T-cell (primary cell): ENCODE measurements at regions of chr9 and their contacts with region 1.

Region 1: GRCh38 chr9:96856363-96857286 is 2.3 kb upstream of the ZNF782 start:
- DNase-seq: peak; percentile 41 to 81 (median 67)
- ATAC-seq: peak; percentile 63 to 74 (median 69)
- H3K4me3 ChIP-seq: no peak overlapping the region
- H3K4me3 Mint-ChIP-seq: no peak overlapping the region
- H3K27ac ChIP-seq: no peak overlapping the region
- H3K27ac Mint-ChIP-seq: no peak overlapping the region
- H3K4me1 ChIP-seq: peaks cover 12 to 20% of the 10 kb centered on the region in 2 experiments
- H3K4me1 Mint-ChIP-seq: peaks cover 31 to 35% (median 32%) of the 10 kb centered on the region in 3 donors
- H3K27me3 ChIP-seq: no peaks in the 10 kb centered on the region
- H3K27me3 Mint-ChIP-seq: no peaks in the 10 kb centered on the region

Region 2: DNA sequence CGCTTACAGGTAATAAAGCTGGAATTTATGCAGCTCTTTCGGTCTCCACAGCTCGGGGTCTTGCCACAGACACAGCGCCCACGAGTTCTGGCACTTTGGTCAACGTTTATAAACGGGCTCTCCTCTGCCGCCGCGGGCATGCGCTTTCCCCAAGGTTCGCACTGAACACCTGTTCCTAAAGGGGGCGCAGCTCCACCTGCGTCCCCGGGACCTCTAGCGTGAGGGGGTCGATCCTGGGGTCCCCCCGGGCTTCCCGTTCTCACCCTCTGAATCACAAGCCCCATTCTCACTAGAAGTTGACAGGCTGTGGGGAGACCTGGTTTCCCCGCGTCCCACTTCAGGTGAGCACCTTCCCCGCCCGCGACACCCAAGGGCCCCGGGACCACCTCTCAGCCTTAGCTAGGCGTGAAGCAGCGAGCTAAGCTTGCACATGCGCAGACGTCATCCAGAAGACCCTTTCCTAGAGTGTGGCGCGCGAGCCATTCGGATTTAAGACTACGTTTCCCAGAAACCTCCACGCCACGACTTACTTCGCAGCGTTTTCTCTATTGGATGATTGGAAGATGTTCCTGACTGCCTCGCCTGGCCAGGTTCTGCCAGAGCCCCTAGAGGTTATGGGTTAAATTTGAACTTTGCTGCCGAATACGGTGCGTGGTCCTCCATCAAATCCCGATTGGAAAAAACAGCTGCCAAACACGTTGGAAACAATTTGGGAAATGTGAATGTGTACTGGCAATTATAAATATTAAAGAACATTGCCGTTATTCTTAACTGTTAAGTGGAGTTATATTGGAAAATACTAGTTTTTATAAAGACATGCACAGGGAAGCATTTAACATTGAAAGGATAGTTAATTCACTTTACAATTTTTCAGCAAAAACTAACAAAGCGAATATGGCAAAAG is 19.1 kb after region 1 on chr9:
- CTCF ChIA-PET with region 1: interaction called, 6 to 22 read pairs
- POLR2A ChIA-PET with region 1: interaction called in 1 of 2 experiments, 3 read pairs
- DNase-seq: peak in 16 of 35 experiments; percentile 4 to 42 (median 14)
- ATAC-seq: peak; percentile 22 to 47 (median 42)
- H3K4me3 ChIP-seq: peak overlapping the region; percentile 52 to 82
- H3K4me3 Mint-ChIP-seq: peak overlapping the region; percentile 76 to 87 (median 81)
- H3K27ac ChIP-seq: peak overlapping the region; percentile 71
- H3K27ac Mint-ChIP-seq: peak overlapping the region; percentile 58 to 68
- H3K4me1 ChIP-seq: peaks cover 10 to 23% of the 10 kb centered on the region in 2 experiments
- H3K4me1 Mint-ChIP-seq: peaks cover 17 to 22% (median 21%) of the 10 kb centered on the region in 3 donors
- H3K27me3 ChIP-seq: peaks cover 5 to 41% of the 10 kb centered on the region in 2 experiments
- H3K27me3 Mint-ChIP-seq: peaks cover 35 to 53% of the 10 kb centered on the region in 2 donors

Region 3: GRCh38 chr9:97398999-97399758 is 542.6 kb after region 1 on chr9:
- CTCF ChIA-PET with region 1: interaction called, 5 to 13 read pairs
- POLR2A ChIA-PET with region 1: no interaction called
- DNase-seq: peak in 33 of 35 experiments; percentile 14 to 81 (median 48)
- ATAC-seq: peak; percentile 78 to 87 (median 81)
- H3K4me3 ChIP-seq: no peak overlapping the region
- H3K4me3 Mint-ChIP-seq: no peak overlapping the region
- H3K27ac ChIP-seq: no peak overlapping the region
- H3K27ac Mint-ChIP-seq: no peak overlapping the region
- H3K4me1 ChIP-seq: peaks cover 0 to 3% of the 10 kb centered on the region in 2 experiments
- H3K4me1 Mint-ChIP-seq: peaks cover 0 to 3% (median 0%) of the 10 kb centered on the region in 3 donors
- H3K27me3 ChIP-seq: peaks cover 0 to 4% of the 10 kb centered on the region in 2 experiments
- H3K27me3 Mint-ChIP-seq: peaks cover 6 to 9% of the 10 kb centered on the region in 2 donors

Region 4: GRCh38 chr9:97598461-97599288 is 742.0 kb after region 1 on chr9:
- CTCF ChIA-PET with region 1: interaction called, 9 to 17 read pairs
- POLR2A ChIA-PET with region 1: no interaction called
- DNase-seq: peak; percentile 32 to 84 (median 63)
- ATAC-seq: peak; percentile 86 to 97 (median 92)
- H3K4me3 ChIP-seq: peak overlapping the region in 1 of 2 donors; percentile 10
- H3K4me3 Mint-ChIP-seq: peak overlapping the region in 2 of 3 donors; percentile 41 to 44
- H3K27ac ChIP-seq: no peak overlapping the region
- H3K27ac Mint-ChIP-seq: peak overlapping the region in 1 of 2 donors; percentile 15
- H3K4me1 ChIP-seq: peaks cover 0 to 7% of the 10 kb centered on the region in 2 experiments
- H3K4me1 Mint-ChIP-seq: peaks cover 7 to 8% (median 7%) of the 10 kb centered on the region in 3 donors
- H3K27me3 ChIP-seq: peaks cover 0 to 2% of the 10 kb centered on the region in 2 experiments
- H3K27me3 Mint-ChIP-seq: peaks cover 0 to 2% of the 10 kb centered on the region in 2 donors

Region 5: DNA sequence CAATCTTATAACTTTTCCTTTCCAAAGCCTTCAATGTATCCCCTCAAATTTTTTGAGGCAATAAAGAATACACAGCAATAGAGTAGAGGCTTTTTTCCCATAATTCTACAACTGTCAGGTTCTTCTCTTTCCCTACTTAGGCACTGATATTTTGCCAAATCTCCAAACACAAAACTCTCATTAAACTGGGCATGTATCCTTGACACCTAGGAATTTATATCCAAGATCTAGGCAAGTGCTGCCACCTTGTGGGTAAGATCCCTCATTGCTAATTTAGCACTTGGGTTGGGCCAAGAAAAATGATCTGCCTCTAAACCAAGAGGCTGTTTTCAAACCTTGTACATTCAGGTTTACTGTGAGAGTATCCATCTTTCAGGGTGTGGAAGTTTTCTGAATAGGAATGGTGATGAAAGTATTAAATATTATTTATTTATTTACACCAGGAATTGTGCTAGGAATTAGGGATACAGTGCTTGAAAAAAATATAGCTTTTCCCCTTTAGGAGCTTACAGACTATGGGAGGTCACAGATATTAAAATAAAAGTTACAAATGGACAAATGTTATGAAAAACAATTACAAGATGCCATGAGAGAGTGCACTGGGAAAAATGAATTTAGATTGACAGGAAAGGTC is 758.9 kb after region 1 on chr9:
- CTCF ChIA-PET with region 1: interaction called, 3 to 19 read pairs
- POLR2A ChIA-PET with region 1: no interaction called
- DNase-seq: peak in 32 of 35 experiments; percentile 7 to 78 (median 38)
- ATAC-seq: peak in 2 of 4 experiments; percentile 52 to 55
- H3K4me3 ChIP-seq: no peak overlapping the region
- H3K4me3 Mint-ChIP-seq: no peak overlapping the region
- H3K27ac ChIP-seq: no peak overlapping the region
- H3K27ac Mint-ChIP-seq: no peak overlapping the region
- H3K4me1 ChIP-seq: no peaks in the 10 kb centered on the region
- H3K4me1 Mint-ChIP-seq: peaks cover 0 to 5% (median 0%) of the 10 kb centered on the region in 3 donors
- H3K27me3 ChIP-seq: no peaks in the 10 kb centered on the region
- H3K27me3 Mint-ChIP-seq: no peaks in the 10 kb centered on the region